K562 (cell line): ENCODE measurements at regions of chr5 and their contacts with region 1.

Region 1: DNA sequence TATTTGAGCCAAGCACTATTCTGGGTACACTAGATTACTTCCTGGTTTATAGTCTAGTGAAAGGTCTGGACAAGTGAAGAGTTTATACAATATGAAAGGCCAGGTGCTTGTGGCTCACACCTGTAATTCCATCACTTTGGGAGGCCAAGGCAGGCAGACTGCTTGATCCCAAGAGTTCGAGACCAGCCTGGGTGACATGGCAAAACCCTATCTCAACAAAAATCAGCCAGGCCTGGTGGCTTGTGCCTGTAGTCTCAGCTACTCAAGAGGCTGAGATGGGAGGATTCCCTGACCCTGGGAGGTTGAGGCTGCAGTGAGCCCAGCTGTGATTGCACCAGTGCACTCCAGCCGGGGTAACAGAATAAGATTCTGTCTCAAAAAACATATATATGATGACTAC is 9.5 kb upstream of the TXNDC15 start:
- DNase-seq: no peak
- ATAC-seq: peak; percentile 44
- H3K4me3 ChIP-seq: no peak overlapping the region
- H3K27ac ChIP-seq: no peak overlapping the region; the same call in 2 of the 3 replicates
- H3K4me1 ChIP-seq: peaks cover 0 to 8% of the 10 kb centered on the region in 2 experiments; a peak in 2 of 5 replicates
- H3K27me3 ChIP-seq: no peaks in the 10 kb centered on the region
- CTCF ChIP-seq: no peak
- EP300 ChIP-seq: no peak
- POLR2A ChIP-seq: no peak
- RAD21 ChIP-seq: no peak

Region 2: DNA sequence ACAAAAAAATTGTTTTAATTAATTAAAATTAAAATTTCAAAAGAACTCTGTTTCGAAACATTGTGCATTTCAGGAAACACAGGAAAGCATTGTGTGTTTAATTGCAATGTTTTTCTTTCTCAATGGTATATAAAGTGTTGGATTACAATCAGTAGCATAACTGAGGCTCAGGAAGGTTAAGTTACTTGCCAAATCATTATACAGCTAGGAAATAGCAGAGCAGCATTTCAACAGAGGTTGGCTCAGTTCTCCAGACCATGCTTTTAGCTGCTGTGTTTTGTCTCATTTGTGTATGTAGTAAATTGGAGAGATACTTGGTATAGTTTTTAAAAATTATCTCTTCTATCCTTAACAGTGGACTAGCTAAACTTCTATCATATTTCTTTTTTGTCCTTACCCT is 156.4 kb before region 1 on chr5:
- CTCF ChIA-PET with region 1: no interaction called
- POLR2A ChIA-PET with region 1: no interaction called
- in situ Hi-C with region 1: no loop called
- intact Hi-C with region 1: no loop called
- DNase-seq: no peak
- ATAC-seq: no peak
- H3K4me3 ChIP-seq: no peak overlapping the region
- H3K27ac ChIP-seq: no peak overlapping the region
- H3K4me1 ChIP-seq: no peaks in the 10 kb centered on the region
- H3K27me3 ChIP-seq: no peaks in the 10 kb centered on the region
- CTCF ChIP-seq: no peak
- EP300 ChIP-seq: no peak
- POLR2A ChIP-seq: no peak
- RAD21 ChIP-seq: no peak

Region 3: DNA sequence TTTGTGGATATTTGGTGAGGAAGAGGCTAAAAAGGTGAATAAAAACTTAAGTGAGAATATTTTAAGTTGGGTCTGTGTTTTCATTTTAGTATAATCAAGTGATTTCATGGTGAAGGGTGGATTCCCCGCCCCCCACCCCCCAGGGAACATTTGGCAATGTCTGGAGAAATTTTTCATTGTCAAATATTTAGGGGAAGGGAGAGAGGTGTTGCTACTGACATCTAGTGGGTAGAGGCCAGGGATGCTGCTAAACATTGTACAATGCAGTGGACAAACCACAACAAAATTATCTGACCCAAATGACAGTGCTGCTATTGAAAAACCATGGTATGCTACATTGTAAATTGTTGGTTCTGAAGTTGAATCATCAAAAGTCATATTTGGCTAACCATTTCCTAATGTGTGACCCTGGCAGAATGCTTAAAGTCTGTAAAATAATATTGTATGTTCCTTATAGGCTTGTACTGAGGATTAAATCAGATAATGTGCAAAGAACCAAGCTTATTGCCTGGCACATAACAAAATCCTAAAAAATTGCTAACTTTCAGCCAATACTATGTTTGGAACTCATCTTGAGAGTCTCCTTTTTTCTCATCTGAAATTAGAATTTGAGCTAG is 13.3 kb before region 1 on chr5:
- CTCF ChIA-PET with region 1: no interaction called
- POLR2A ChIA-PET with region 1: interaction called, 12 read pairs
- in situ Hi-C with region 1: no loop called
- intact Hi-C with region 1: no loop called
- DNase-seq: peak; percentile 22 to 47 (median 26)
- ATAC-seq: peak; percentile 62
- H3K4me3 ChIP-seq: no peak overlapping the region
- H3K27ac ChIP-seq: peak overlapping the region; percentile 17; the same call in 1 of the 3 replicates
- H3K4me1 ChIP-seq: peaks cover 11 to 29% of the 10 kb centered on the region in 2 experiments; a peak in 4 of 5 replicates
- H3K27me3 ChIP-seq: no peaks in the 10 kb centered on the region
- CTCF ChIP-seq: peak; percentile 54 to 63 (median 57); a peak in 5 of 6 replicates
- EP300 ChIP-seq: no peak
- POLR2A ChIP-seq: no peak
- RAD21 ChIP-seq: peak in 1 of 2 experiments; percentile 45; a peak in 2 of 4 replicates